Cardiac septum (tissue), 1 donor: ENCODE measurements at regions of chr20 and their contacts with region 1.

Region 1: DNA sequence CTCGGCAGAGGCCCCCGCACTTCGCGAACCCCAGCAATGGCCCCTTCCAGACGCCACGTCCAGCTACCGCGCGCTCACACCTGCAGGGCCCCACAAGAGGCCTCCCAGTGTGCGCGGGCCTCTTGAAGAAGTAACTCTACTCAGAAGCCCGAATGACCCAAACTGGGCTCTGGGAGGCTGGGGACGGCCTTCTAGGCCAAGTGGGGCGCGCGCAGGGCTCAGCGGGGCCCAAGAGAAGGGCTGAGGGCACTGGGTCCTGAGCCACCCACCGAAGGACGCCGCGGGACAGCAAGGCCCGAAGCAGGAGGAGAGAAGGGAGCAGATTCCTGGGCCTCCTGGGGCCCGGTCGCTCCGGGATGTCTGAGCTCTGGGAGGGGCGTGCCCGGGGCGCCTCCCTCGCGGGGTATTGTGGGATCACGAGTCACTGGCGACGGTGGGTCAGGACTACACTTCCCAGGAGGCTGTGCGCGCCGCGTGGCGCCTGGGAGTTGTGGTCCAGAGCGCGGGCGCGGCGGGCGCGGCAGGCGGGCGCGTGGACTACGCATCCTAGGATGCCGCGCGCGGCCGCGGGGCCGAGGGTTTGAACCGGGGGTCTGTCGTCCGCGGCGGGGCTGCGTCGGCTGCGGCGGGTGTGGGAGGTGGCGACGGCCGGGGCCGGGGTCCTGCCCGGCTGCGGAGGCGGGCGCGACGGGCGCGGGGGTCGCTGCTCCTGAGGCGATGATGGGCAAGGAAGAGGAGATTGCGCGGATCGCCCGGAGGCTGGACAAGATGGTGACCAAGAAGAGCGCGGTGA is at the start of gene TCEA2:
- DNase-seq: peak; percentile 98
- total RNA-seq, gene TCEA2: 66.0 TPM

Region 2: GRCh38 chr20:63520504-63520933 is 542.3 kb before region 1 on chr20 and contains the start of gene PPDPF:
- intact Hi-C with region 1: loop called (anchors 10 kb)
- DNase-seq: peak; percentile 91
- total RNA-seq, gene PPDPF: 438 TPM

Region 3: DNA sequence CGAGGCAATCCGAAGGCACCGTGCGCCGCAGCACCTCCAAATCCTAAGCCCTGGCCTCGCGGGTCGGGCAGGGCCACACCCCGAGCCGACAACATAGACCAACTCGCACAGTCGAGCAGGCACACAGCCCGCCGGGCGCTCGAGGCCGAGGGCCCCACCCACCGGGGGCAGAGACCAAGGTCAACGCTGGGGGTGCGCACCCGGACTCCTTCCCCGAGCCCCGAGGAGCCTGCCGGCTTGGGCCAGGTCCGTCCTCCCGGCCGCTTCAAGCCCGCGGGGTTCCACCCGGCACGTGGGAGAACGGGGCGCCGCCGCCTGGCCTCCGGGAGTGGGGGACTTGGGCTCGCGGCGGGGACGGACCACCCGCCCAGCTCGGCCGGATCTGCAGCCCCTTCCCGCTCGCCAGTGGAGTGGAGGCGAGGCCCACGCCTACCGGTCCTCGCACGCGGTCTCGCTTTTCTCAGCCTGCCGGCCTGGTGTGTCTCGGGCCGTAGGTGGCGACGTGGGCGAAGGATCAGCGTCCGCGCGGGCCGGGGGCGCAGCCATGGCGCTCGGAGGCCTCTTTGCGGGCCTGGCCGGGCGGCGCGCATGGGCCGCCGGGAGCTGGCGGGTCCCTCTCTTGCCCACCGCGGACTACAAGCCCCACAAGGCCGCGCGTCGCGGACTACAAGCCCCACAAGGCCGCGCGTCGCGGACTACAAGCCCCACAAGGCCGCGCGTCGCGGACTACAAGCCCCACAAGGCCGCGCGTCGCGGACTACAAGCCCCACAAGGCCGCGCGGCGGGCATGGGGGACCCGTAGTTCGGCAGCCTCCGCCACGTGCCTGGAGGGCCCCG is 106.7 kb before region 1 on chr20 and contains the start of gene UCKL1:
- intact Hi-C with region 1: loop called (anchors 2 kb)
- DNase-seq: peak; percentile 91
- total RNA-seq, gene UCKL1: 43.2 TPM

Region 4: DNA sequence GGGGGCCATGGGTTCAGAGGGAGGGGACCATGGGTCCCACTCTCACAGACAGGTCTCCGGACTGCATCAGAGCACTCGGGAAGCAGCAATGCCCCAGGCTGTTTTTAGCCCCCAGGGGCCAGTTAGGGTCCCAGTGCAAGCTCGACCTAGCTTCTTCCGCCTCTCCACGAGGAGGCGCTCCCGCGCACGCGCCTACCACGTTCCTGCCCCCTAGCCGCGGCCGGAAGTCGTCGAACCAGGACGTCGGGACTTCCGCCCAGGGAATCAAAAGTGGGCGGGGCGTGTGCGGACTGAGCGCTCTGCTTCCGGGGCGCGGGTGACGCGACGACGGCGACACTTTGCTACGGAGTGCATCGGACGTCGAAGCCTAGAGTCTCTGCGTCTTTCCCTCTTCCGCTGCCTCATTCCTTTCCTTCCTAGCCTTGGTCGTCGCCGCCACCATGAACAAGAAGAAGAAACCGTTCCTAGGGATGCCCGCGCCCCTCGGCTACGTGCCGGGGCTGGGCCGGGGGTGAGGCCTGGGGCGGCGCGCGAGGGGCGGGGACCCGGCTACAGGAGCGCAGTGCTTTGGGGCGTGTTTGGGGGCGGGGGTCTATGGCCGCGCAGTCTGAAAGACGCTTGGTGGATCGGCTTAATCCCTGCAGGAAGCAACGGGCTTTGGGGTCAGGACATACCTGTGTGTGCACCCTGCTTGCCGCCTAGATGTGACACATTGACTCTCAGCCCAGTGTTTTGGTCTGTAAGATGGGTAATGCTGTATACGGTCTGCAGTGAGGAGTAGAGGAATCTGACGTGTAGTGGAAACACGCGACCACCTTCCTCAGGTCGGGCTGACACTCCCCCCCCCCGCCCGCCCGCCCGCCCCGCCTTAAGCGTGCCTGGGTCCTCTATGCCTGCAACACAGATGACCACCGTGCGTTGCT is 81.7 kb before region 1 on chr20 and contains the start of gene PRPF6:
- intact Hi-C with region 1: loop called (anchors 2 kb)
- DNase-seq: peak; percentile 97
- total RNA-seq, gene PRPF6: 47.5 TPM

Region 5: DNA sequence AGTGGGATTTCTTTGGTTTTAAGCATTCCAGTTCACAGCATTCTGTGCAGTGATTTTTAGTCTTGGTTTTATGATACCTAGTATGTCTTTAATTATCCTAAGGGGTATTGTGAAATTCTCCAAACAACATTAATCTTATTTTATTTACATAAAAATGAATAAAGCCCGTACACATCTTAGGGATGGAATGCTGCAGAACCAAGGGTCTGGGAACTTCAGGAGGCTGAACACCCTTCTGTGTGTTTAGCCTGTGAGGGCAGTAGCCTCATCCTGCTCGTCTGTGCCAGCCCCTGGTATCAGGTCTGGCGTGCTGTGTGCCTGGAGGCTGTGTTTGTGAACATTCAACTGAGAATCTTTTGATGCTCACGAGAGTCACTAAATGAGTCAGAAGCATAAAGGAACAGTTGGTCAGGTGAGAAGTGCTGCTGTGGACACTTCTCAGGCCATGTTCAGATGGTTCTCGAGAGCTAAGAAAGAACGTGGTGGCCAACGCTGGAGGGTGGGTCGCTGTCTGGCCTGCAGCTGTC is 52.0 kb before region 1 on chr20:
- intact Hi-C with region 1: no loop called
- DNase-seq: no peak

Region 6: DNA sequence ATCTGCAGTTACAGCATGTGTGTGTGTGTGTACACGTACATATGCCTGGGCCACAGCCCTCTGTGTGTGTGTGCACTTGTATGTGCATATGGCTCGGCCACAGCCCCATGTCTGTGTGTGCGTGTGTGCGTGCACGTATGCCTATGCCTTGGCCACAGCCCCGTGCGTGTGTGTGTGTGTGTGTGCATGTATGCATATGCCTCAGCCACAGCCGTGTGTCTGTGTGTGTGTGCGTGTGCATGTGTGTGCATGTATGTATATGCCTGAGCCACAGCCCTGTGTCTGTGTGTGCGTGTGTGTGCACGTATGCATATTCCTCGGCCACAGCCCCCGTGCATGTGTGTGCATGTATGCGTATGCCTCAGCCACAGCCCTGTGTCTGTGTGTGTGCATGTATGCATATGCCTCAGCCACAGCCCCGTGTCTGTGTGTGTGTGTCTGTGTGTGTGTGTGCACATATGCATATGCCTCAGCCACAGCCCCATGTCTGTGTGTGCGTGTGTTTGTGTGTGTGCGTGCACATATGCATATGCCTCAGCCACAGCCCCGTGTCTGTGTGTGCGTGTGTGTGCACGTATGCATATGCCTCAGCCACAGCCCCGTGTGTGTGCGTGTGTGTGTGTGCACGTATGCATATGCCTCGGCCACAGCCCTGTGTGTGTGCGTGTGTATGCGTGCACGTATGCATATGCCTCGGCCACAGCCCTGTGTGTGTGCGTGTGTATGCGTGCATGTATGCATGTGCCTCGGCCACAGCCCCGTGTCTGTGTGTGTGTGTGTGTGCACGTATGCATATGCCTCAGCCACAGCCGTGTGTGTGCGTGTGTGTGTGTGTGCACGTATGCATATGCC is 41.4 kb before region 1 on chr20:
- intact Hi-C with region 1: no loop called
- DNase-seq: no peak